Endothelial cell of umbilical vein (primary cell): ENCODE measurements at regions of chr6 and their contacts with region 1.

Region 1: GRCh38 chr6:149545754-149546528 is at the start of gene PPIL4:
- DNase-seq: peak; percentile 96
- H3K4me3 ChIP-seq: peak within 1 kb of the TSS; percentile 59 to 85 (median 62)
- H3K27ac ChIP-seq: peak within 1 kb of the TSS; percentile 92
- H3K4me1 ChIP-seq: peaks cover 8% of the 10 kb centered on the region
- H3K27me3 ChIP-seq: peaks cover 2 to 7% of the 10 kb centered on the region in 2 experiments
- CTCF ChIP-seq: peak; percentile 82
- POLR2A ChIP-seq: peak; percentile 82
- total RNA-seq, gene PPIL4: 24.3 and 27.8 TPM in 2 replicates

Region 2: DNA sequence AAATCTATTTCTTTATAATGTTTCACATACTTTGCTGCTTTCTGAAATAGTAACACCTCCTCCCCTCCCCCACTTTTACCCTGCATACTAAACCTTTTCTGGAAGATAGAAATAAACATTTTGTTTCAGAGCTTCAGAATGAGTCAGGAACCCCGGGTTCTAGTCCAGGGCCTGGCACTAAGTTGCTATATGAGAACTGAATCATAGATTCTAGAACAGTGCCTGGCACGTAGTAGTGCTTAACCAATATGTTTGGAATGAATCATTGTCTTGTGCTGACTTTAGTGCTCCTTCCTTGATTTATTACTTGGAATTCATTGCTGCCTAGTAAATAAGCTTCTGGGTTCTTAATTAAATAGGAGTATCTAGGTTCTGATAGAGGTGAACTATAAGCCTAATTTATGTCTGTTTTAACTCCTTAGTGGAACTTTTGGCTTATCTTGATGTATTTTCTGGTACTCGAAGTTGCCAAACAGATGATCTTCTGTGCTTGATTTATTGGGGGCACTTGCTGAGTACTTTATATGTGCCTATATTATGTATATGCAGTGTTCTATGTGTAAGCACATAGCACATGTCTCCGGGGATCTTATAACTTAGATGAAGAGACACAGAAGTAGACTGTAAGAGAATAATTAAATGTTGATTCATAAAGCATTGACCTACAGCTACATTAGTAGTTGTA is 209.9 kb before region 1 on chr6:
- CTCF ChIA-PET with region 1: no interaction called
- POLR2A ChIA-PET with region 1: no interaction called
- dilution Hi-C with region 1: no loop called
- intact Hi-C with region 1: loop called (anchors 10 kb)
- DNase-seq: peak; percentile 67
- H3K4me3 ChIP-seq: no peak overlapping the region
- H3K27ac ChIP-seq: peak overlapping the region; percentile 61
- H3K4me1 ChIP-seq: peaks cover 43% of the 10 kb centered on the region
- H3K27me3 ChIP-seq: no peaks in the 10 kb centered on the region
- CTCF ChIP-seq: no peak
- POLR2A ChIP-seq: no peak

Region 3: DNA sequence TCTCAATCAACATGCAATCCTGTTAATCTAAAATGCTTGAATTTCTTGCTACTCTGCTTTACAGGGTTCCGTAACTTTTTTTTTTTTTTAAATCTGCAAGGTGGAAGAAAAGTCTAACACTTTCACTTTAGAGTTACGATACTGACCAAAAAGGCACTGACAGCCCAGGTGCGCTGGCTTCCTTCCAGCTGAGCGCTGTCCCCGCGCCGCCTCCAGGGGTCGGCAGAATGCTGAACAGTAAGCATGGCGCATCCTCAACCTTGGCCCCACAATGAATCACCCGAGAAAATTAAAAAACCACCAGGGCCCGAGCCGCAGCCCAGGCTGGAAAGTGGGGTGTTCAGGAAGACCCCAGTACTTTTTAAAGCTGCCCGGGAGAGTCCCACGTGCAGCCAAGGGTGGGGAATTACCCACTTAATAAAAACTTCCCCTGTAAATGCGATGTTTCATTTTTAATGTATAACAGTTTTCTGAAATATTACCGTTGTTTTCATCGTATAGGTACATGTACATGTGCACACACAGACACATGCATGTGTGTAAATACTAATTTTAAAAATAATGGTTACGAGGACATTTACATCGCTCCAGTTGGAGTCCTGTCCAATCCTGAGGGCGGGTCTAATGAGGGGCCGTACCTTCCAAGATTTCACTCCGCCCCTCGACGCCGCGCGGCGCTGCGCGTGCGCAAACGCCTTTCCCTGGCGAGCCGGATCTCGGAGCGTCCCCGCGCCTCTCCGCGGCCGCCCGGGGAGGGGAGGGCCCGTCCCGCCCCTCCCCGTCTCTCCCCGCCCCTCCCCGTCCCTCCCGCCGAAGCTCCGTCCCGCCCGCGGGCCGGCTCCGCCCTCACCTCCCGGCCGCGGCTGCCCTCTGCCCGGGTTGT is 19.8 kb after region 1 on chr6 and contains the start of gene GINM1:
- CTCF ChIA-PET with region 1: interaction called, 35 read pairs
- POLR2A ChIA-PET with region 1: interaction called, 3 read pairs
- dilution Hi-C with region 1: no loop called
- intact Hi-C with region 1: loop called (anchors 1 kb)
- DNase-seq: peak; percentile 97
- H3K4me3 ChIP-seq: peak within 1 kb of the TSS; percentile 75 to 93 (median 85)
- H3K27ac ChIP-seq: peak within 1 kb of the TSS; percentile 82
- H3K4me1 ChIP-seq: peaks cover 16% of the 10 kb centered on the region
- H3K27me3 ChIP-seq: no peaks in the 10 kb centered on the region
- CTCF ChIP-seq: peak; percentile 52 to 71
- POLR2A ChIP-seq: no peak
- total RNA-seq, gene GINM1: 38.0 and 38.2 TPM in 2 replicates

Region 4: DNA sequence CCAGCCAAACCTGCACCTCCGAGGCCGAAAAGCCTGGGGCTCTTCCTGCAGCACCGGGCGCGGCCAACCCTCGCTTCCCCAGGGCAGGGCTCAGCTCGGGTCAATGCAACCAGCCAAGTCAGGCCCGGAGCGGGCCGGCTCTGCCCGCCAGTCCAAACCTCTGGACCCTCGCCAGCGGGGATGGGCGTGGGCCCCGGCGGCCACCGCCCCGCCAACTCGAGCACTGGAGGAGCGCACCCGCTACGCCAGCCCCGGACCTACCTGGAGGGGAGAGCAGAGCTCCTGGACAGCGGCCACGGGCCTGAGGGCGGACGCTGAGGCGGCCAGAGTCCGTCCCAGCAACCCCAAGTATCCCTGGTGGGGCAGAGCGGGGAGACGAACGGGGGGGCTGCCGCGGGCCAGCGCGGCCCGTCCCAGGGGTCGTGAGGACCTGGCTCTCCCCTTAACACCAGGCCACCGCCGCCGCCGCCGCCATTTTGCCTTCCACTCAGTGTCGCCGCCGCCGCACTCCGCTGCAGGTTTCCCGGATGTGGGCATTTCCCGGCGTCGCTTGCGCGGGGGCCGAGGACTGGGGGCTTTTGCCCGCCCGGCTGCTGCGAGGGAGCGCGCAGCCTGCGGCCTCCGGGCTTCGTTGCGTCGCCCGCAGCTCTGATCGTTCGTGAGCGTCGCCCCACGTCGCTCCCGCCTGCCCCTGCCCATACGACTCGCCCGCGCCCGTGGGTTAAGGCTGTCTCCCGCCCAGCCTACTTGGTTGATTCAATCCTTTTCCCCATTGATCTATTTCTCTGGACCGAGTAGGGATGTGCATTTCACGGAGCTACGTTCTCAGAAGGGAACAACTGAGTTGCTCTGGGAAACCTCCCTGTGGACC is 171.9 kb after region 1 on chr6 and contains the start of gene LATS1:
- CTCF ChIA-PET with region 1: no interaction called
- POLR2A ChIA-PET with region 1: no interaction called
- dilution Hi-C with region 1: no loop called
- intact Hi-C with region 1: loop called (anchors 1 kb)
- DNase-seq: peak; percentile 84
- H3K4me3 ChIP-seq: peak within 1 kb of the TSS; percentile 65 to 98 (median 96)
- H3K27ac ChIP-seq: peak within 1 kb of the TSS; percentile 81
- H3K4me1 ChIP-seq: peaks cover 16% of the 10 kb centered on the region
- H3K27me3 ChIP-seq: no peaks in the 10 kb centered on the region
- CTCF ChIP-seq: no peak
- POLR2A ChIP-seq: peak; percentile 98
- total RNA-seq, gene LATS1: 27.6 and 28.7 TPM in 2 replicates

Region 5: GRCh38 chr6:149855037-149855654 is 309.2 kb after region 1 on chr6:
- CTCF ChIA-PET with region 1: no interaction called
- POLR2A ChIA-PET with region 1: no interaction called
- dilution Hi-C with region 1: no loop called
- intact Hi-C with region 1: loop called (anchors 5 kb)
- DNase-seq: peak; percentile 93
- H3K4me3 ChIP-seq: peak overlapping the region; percentile 35 to 74 (median 58)
- H3K27ac ChIP-seq: peak overlapping the region; percentile 95
- H3K4me1 ChIP-seq: peaks cover 73% of the 10 kb centered on the region
- H3K27me3 ChIP-seq: no peaks in the 10 kb centered on the region
- CTCF ChIP-seq: no peak
- POLR2A ChIP-seq: peak; percentile 45